ENCODE measurements at regions of chr3 and their contacts with region 1.

Region 1: DNA sequence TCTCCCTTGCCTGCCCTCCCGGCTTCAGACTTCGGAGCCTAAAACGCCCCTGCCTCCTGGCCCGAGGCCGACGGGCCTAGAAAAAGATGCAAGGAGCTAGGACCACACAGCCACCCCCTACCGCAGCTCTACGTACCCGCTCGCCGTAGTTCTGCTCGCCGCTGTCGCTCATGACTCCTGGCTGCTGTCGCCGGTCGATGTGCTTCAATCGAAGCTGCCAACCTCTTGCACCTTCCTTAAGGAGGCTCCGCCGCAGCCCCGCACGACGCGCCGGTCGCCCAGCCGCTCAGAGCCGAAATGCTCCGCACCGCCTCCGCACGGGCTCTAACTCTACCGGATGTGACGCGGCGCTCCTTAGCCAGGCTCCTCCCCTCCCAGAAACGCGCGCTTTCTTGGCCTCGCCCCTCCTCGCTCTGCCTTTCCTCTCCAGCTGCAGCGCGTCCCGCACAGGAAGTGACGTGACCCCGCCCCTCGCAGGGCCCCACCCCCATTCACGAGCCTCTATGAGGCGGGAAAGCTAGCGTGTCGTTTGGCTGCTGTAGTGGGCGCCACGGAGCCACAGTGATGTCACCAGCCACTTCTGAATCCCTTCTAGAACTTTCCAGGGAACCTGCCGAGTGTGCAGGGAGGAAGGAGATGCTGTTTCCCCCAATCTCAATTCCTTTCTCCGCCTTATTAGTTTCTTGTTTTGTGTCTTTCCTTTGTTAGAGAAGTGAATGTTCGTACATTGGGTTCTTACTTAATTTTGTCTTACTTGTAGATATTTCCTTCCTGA is at the start of gene TRA2B:
- DNase-seq: peak; percentile 97
- ATAC-seq: peak; percentile 88
- H3K4me3 Mint-ChIP-seq: peak within 1 kb of the TSS; percentile 99
- H3K27ac Mint-ChIP-seq: peak within 1 kb of the TSS; percentile 100
- H3K4me1 Mint-ChIP-seq: peaks cover 35% of the 10 kb centered on the region
- H3K27me3 Mint-ChIP-seq: peaks cover 6% of the 10 kb centered on the region
- total RNA-seq, gene TRA2B: 222 to 243 TPM

Region 2: GRCh38 chr3:185837414-185837813 is 100.5 kb before region 1 on chr3:
- POLR2A ChIA-PET with region 1: no interaction called
- DNase-seq: no peak
- ATAC-seq: no peak
- H3K4me3 Mint-ChIP-seq: no peak overlapping the region
- H3K27ac Mint-ChIP-seq: no peak overlapping the region
- H3K4me1 Mint-ChIP-seq: no peaks in the 10 kb centered on the region
- H3K27me3 Mint-ChIP-seq: peaks cover 18% of the 10 kb centered on the region

Region 3: GRCh38 chr3:185912929-185913901 is 24.7 kb before region 1 on chr3:
- POLR2A ChIA-PET with region 1: interaction called, 15 read pairs
- DNase-seq: no peak
- ATAC-seq: no peak
- H3K4me3 Mint-ChIP-seq: no peak overlapping the region
- H3K27ac Mint-ChIP-seq: peak overlapping the region; percentile 30
- H3K4me1 Mint-ChIP-seq: peaks cover 2% of the 10 kb centered on the region
- H3K27me3 Mint-ChIP-seq: no peaks in the 10 kb centered on the region

Region 4: GRCh38 chr3:185959609-185960517 is 22.0 kb after region 1 on chr3:
- POLR2A ChIA-PET with region 1: interaction called, 12 read pairs
- DNase-seq: no peak
- ATAC-seq: peak; percentile 45
- H3K4me3 Mint-ChIP-seq: no peak overlapping the region
- H3K27ac Mint-ChIP-seq: peak overlapping the region; percentile 40
- H3K4me1 Mint-ChIP-seq: peaks cover 3% of the 10 kb centered on the region
- H3K27me3 Mint-ChIP-seq: peaks cover 8% of the 10 kb centered on the region

Region 5: DNA sequence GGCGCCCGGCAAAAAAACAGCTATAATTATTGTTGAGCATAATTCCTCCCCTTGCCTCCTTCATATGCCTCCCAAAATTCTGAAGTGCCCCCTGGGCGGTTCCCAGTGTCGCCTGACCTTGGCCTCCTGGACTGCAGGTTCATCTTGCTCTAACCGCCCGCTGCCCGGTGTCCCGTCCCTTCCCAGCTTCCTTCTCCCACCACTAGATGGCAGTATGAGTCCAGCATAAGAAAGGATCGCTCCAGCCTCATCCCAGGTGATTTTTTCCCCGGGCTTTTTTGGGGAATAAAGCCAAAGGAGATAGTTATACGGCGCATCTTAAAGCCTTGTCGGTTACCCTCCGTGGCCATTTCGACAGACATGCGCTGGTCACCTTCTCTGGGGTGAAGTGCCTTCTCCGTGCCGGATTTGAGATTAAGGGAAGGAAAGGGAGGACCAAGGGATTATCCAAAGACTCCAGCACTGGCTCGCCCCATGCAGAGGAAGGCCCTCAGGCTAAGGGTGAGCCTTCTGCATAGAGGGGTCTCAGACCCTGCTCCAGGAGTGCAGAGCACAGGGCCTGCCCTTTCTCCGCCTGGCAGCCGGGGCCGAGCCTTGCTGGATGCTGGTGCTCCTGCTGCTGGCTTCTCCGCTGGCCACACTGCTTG is 45.7 kb after region 1 on chr3:
- POLR2A ChIA-PET with region 1: no interaction called
- DNase-seq: peak; percentile 55
- ATAC-seq: peak; percentile 60
- H3K4me3 Mint-ChIP-seq: no peak overlapping the region
- H3K27ac Mint-ChIP-seq: no peak overlapping the region
- H3K4me1 Mint-ChIP-seq: no peaks in the 10 kb centered on the region
- H3K27me3 Mint-ChIP-seq: peaks cover 21% of the 10 kb centered on the region

Region 6: GRCh38 chr3:186013312-186013711 is 75.4 kb after region 1 on chr3:
- POLR2A ChIA-PET with region 1: no interaction called
- DNase-seq: no peak
- ATAC-seq: no peak
- H3K4me3 Mint-ChIP-seq: no peak overlapping the region
- H3K27ac Mint-ChIP-seq: no peak overlapping the region
- H3K4me1 Mint-ChIP-seq: no peaks in the 10 kb centered on the region
- H3K27me3 Mint-ChIP-seq: peaks cover 30% of the 10 kb centered on the region

Region 7: GRCh38 chr3:186570096-186570940 is 632.4 kb after region 1 on chr3 and contains the start of gene DNAJB11:
- POLR2A ChIA-PET with region 1: interaction called, 50 read pairs
- DNase-seq: peak; percentile 95
- ATAC-seq: peak; percentile 89
- H3K4me3 Mint-ChIP-seq: peak within 1 kb of the TSS; percentile 96
- H3K27ac Mint-ChIP-seq: peak within 1 kb of the TSS; percentile 99
- H3K4me1 Mint-ChIP-seq: peaks cover 32% of the 10 kb centered on the region
- H3K27me3 Mint-ChIP-seq: no peaks in the 10 kb centered on the region
- total RNA-seq, gene DNAJB11: 37.0 to 41.2 TPM